Activated B cell treated with CpG ODN at 0.5 μM for 24 hours (primary cell): ENCODE measurements at regions of chr6 and their contacts with region 1.

Region 1: GRCh38 chr6:44237813-44238433 is 9.0 kb upstream of the HSP90AB1 start:
- DNase-seq: peak; percentile 87
- ATAC-seq: peak; percentile 91
- H3K4me3 Mint-ChIP-seq: peak overlapping the region; percentile 95
- H3K27ac Mint-ChIP-seq: peak overlapping the region; percentile 90
- H3K4me1 Mint-ChIP-seq: peaks cover 17% of the 10 kb centered on the region
- H3K27me3 Mint-ChIP-seq: no peaks in the 10 kb centered on the region
- CTCF ChIP-seq: peak; percentile 84

Region 2: DNA sequence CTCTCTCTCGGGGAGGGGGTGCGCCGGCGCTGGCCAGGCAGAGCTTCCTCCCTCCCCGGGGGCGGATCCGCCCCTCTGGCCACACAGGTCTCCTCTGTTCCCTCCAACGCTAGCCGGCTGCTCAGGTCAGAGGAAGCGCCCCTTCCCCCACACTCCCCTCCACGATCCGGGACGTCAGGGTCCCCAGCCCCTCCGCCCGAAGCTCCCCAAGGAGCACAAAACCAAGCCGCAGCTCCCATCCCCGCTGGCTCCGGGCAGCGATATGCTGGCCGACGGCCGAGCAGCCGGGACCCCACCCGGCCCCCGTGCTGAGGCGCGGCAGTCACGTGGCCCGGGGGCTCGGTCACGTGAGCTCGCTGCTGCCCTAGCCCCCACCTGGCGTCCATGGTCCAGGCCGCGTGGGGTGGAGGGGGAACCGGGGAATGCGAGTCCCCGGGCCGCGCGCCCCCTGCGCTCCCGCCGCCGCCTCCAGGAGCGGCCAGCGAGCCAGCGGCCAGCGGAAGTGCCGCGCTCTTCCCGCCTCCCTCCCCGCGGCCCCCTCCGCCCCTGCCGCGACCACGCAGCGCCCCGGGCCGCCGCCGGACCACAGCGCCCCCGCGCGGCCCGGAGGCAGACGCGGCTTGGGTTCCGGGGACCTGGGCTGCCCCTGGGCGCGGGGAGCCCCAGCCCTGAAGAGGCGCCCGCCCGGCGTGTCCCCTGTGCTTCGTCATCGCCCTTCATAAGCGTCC is 19.3 kb after region 1 on chr6 and contains the start of gene SLC35B2:
- CTCF ChIA-PET with region 1: interaction called, 5 read pairs
- POLR2A ChIA-PET with region 1: interaction called, 549 read pairs
- intact Hi-C with region 1: no loop called
- DNase-seq: peak; percentile 74
- ATAC-seq: peak; percentile 53
- H3K4me3 Mint-ChIP-seq: peak within 1 kb of the TSS; percentile 92
- H3K27ac Mint-ChIP-seq: peak within 1 kb of the TSS; percentile 99
- H3K4me1 Mint-ChIP-seq: peaks cover 88% of the 10 kb centered on the region
- H3K27me3 Mint-ChIP-seq: no peaks in the 10 kb centered on the region
- CTCF ChIP-seq: no peak
- total RNA-seq, gene SLC35B2: 27.0 and 29.1 TPM in 2 replicates

Region 3: GRCh38 chr6:44353336-44353735 is 115.4 kb after region 1 on chr6:
- CTCF ChIA-PET with region 1: no interaction called
- POLR2A ChIA-PET with region 1: no interaction called
- intact Hi-C with region 1: no loop called
- DNase-seq: no peak
- ATAC-seq: no peak
- H3K4me3 Mint-ChIP-seq: no peak overlapping the region
- H3K27ac Mint-ChIP-seq: no peak overlapping the region
- H3K4me1 Mint-ChIP-seq: no peaks in the 10 kb centered on the region
- H3K27me3 Mint-ChIP-seq: peaks cover 11% of the 10 kb centered on the region
- CTCF ChIP-seq: no peak